Activated CD4-positive, alpha-beta memory T cell treated with anti-CD3 and anti-CD28 coated beads for 36 hours (primary cell): ENCODE measurements at regions of chr1 and their contacts with region 1.

Region 1: DNA sequence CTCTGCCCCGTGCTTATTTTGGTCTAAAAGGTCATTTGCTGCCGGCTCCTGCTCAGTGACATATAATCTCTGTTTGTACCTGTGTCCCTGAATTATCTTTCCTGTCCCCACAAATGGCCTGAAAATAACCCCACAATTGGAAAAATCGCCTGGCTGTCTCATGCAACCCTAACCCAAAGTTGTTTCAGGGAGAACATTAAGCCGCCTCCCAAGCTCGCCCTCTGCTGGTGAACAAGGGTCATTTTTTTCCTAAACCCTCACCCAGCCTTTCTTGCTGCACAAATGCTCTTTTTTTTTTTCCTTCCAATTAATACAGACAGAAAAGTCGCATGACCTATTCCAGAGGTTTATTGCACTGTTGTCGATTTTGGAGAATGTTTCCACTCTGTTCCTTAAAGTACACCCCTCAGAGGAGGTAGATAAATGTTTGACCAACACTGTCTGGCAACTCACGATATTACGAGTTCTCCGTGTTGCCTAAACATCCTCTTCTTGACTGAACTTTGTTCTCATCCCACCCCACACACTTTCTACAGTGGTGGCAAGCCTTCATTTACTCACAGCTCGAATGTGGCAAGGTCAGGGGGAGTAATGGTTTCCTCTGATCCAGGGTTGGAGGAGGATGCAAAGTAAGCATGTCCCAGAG is 148.7 kb downstream of the ZZZ3 start:
- DNase-seq: peak; percentile 66
- H3K4me3 Mint-ChIP-seq: no peak overlapping the region
- H3K27ac Mint-ChIP-seq: no peak overlapping the region
- H3K4me1 Mint-ChIP-seq: peaks cover 4% of the 10 kb centered on the region
- H3K27me3 Mint-ChIP-seq: no peaks in the 10 kb centered on the region

Region 2: DNA sequence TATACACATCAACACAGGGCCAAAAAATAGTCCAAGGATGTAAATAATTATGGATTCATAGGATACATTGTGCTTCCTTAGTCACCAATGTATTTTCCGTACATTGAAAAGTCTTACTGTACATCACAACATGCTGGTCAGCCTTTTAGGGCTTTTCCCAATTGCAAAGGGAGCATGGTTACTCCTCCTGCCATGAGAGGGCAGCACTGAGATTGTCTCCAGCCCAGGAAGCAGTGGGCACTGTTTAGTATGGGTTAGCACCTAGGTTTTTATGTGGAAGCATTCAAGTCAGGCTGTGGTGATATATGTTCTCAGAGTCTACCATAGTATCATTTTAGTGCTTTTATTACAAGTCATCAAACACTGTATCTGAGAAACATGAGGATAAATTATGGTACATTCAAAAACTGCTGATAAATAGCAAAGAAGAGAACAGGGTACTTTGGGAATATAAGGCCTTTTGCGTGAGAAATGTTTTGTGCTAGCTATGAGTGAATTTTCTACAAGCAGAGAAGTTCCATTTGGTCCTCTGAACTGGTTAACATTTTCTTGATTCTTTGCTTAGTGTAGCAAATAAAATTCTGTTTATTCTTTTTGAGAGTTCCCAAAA is 632.5 kb before region 1 on chr1:
- CTCF ChIA-PET with region 1: no interaction called
- POLR2A ChIA-PET with region 1: no interaction called
- intact Hi-C with region 1: loop called (anchors 2 kb)
- DNase-seq: peak; percentile 34
- H3K4me3 Mint-ChIP-seq: no peak overlapping the region
- H3K27ac Mint-ChIP-seq: no peak overlapping the region
- H3K4me1 Mint-ChIP-seq: no peaks in the 10 kb centered on the region
- H3K27me3 Mint-ChIP-seq: peaks cover 2% of the 10 kb centered on the region

Region 3: DNA sequence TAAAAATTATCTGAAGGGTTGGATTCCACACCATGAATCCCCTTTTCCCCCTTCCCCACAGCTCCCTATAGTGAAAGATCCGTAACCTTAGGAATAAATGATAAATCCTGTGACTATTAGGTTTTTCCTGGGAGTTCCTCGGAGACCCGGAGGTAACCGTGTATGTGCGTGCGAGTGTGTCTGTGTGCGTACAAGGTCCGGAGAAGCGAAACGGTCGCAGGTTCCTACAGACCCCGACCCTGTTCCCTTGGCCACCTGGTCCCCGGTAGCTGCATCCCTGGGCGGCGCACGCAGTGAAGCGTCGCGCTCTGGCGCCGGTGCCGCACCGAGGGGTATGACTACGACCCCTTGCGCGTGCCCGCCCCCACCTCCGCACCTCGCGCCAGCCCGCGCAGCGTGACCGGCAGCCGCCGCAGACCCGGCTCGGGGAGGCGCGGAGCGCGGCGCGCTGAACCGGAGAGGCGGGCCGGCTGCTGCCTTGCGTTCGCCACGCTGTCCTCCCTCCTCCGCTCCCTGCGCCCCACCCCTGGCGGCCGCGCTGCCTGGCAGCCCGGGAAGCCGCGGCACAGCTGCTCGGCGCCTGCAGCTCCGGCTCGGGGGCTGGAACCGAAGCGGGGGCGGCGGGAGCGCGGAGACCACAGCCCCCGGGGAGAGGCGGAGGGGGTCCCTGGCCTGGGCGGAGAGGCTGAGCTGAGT is 252.1 kb before region 1 on chr1 and contains the start of gene AK5:
- CTCF ChIA-PET with region 1: interaction called, 4 read pairs
- POLR2A ChIA-PET with region 1: no interaction called
- intact Hi-C with region 1: loop called (anchors 10 kb)
- DNase-seq: peak; percentile 56
- H3K4me3 Mint-ChIP-seq: peak within 1 kb of the TSS; percentile 64
- H3K27ac Mint-ChIP-seq: no peak within 1 kb of the TSS
- H3K4me1 Mint-ChIP-seq: peaks cover 21% of the 10 kb centered on the region
- H3K27me3 Mint-ChIP-seq: peaks cover 5% of the 10 kb centered on the region
- total RNA-seq, gene AK5: 1.6 to 2.2 TPM

Region 4: GRCh38 chr1:77545970-77546369 is 12.2 kb after region 1 on chr1:
- CTCF ChIA-PET with region 1: interaction called, 22 read pairs
- POLR2A ChIA-PET with region 1: no interaction called
- intact Hi-C with region 1: no loop called
- DNase-seq: no peak
- H3K4me3 Mint-ChIP-seq: no peak overlapping the region
- H3K27ac Mint-ChIP-seq: no peak overlapping the region
- H3K4me1 Mint-ChIP-seq: no peaks in the 10 kb centered on the region
- H3K27me3 Mint-ChIP-seq: no peaks in the 10 kb centered on the region